Mucosa of descending colon (tissue), 3 donors: ENCODE measurements at regions of chr10 and their contacts with region 1.

Region 1: GRCh38 chr10:42866115-42866995 is 83.8 kb downstream of the BMS1 start:
- DNase-seq: peak; percentile 71 to 82 (median 74)
- ATAC-seq: peak; percentile 97
- H3K4me3 ChIP-seq: no peak overlapping the region
- H3K4me1 ChIP-seq: peaks cover 5% of the 10 kb centered on the region
- CTCF ChIP-seq: peak; percentile 55

Region 2: DNA sequence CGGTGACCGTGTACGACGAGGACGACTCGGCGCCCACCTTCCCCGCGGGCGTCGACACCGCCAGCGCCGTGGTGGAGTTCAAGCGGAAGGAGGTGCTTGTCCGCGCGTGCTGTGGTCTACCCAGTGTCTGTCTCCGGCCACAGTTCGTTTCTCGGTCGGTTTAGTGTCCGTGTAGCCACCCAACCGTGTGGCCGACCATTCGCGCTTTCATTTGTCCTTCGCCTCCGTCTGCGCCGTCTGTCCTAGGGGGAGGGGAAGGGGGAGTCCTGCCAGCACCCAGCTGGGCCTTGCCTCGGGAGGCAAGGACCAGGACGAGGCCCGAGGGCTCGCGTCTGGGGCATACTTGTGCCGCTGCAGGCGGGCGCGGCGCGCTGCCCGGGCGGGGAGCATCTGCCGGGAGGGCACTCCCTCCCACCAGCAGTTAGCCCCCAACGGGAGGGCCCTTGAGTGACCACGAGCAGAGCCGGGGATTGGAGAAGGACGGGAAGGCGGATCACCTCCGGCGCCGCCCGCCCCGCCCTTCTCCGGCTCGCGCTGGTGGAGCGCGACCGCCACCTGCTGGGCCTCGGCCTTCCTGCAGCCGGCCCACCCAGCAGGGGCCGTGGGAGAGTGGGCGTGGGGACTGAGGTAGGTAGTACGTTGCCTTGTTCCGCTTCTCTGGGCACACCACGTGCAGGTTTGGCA is 238.9 kb after region 1 on chr10:
- intact Hi-C with region 1: loop called (anchors 2 to 5 kb)
- DNase-seq: peak; percentile 74 to 84 (median 78)
- ATAC-seq: peak; percentile 95
- H3K4me3 ChIP-seq: no peak overlapping the region
- H3K4me1 ChIP-seq: peaks cover 14% of the 10 kb centered on the region
- CTCF ChIP-seq: peak; percentile 100